ENCODE measurements at regions of chr4 and their contacts with region 1.

Region 1: DNA sequence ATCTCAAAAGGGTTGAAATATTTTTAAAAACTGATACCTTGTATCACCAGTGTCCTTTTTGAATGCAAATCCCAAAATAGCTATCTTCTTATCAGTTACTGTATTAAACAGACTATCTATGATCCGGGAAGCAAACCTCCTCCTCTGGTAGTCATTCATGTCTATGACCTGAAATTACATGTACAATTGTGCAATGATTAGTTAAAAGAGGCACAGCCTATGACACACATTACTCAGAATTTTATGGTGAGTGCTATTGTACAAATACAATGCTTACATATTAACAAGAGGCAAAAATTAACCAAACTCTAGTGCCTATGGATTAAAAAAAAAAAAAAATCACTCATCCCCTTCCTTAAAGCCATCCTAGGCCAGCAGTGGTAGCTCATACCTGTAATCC is 21.7 kb downstream of the UGDH start:
- DNase-seq: no peak
- H3K4me3 ChIP-seq: no peak overlapping the region
- H3K27ac ChIP-seq: no peak overlapping the region
- H3K4me1 ChIP-seq: no peaks in the 10 kb centered on the region
- H3K27me3 ChIP-seq: no peaks in the 10 kb centered on the region
- CTCF ChIP-seq: no peak

Region 2: DNA sequence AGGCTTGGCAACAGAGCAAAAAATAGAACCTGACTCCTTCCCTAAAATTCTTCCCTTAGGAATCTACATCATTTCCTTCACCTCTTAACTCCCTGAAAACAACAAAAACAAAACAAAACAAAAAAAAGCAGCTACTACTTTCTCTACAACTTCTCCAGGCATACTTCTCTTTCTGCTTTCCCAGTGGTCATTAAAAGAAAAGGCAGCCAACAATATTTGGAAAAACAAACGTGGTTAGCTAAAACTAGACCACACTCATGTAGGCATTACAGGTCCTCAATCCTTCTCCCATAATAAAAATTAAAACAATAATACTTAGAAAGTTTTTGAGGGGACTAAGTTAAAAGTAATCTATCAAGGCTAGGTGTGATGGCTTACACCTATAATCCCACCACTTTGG is 162.1 kb after region 1 on chr4:
- CTCF ChIA-PET with region 1: no interaction called
- POLR2A ChIA-PET with region 1: interaction called, 14 read pairs
- intact Hi-C with region 1: no loop called
- DNase-seq: no peak
- H3K4me3 ChIP-seq: no peak overlapping the region
- H3K27ac ChIP-seq: no peak overlapping the region
- H3K4me1 ChIP-seq: no peaks in the 10 kb centered on the region
- H3K27me3 ChIP-seq: no peaks in the 10 kb centered on the region
- CTCF ChIP-seq: no peak

Measured in PC-9 (cell line).